ENCODE measurements at regions of chr1 and their contacts with region 1.

Region 1: DNA sequence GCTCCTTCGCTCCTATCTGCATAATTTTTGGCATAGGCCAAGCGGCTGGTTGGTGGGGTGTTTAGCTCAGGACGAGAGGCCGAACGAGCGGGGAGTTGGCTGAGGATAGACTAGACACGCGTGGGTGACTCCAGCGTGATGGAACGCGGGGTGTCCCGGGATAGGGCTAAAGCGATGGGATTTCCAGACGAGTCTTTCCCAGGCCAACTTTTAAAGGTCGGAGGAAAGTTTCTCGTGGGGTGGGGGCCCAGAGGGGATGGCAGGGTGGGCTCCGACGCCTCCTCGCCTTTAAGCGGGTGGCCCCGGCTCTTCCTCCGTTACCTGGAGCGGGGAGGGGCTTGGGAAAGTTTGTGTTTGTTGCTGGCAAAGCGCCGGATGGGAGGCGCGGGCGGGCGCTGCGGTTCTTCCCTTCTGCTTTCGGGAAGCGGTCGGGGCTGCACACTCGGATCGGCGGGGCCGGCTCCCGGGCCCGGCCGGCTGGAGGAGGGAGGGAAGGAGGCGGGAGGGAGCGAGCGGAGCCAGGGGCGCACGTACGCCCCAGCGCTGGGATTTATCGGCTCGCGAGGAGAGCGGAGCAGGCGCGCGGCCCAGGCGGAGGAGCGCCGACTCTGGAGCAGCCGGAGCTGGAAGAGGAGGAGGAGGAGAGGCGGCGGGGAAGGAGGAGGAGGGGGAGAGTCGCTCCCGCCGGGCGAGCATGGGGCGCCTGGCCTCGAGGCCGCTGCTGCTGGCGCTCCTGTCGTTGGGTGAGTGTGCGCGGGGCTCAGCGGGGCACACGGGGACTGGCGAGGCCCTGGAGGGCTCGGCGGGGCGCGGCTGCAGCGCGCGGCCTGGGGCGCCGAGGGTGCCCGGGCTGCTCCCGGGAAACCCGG is at the start of gene PTGFRN:
- DNase-seq: peak in 3 of 5 donors; percentile 12 to 19 (median 19)
- H3K4me3 ChIP-seq: peak within 1 kb of the TSS; percentile 18 to 54
- H3K4me3 Mint-ChIP-seq: peak within 1 kb of the TSS; percentile 77 to 90 (median 84)
- H3K27ac ChIP-seq: no peak within 1 kb of the TSS
- H3K27ac Mint-ChIP-seq: peak within 1 kb of the TSS in 4 of 7 donors; percentile 5 to 67 (median 32)
- H3K4me1 ChIP-seq: peaks cover 13% of the 10 kb centered on the region
- H3K4me1 Mint-ChIP-seq: peaks cover 1 to 7% (median 4%) of the 10 kb centered on the region in 4 donors
- H3K27me3 ChIP-seq: no peaks in the 10 kb centered on the region
- H3K27me3 Mint-ChIP-seq: no peaks in the 10 kb centered on the region
- total RNA-seq, gene PTGFRN: 0.44 to 0.55 TPM

Region 2: DNA sequence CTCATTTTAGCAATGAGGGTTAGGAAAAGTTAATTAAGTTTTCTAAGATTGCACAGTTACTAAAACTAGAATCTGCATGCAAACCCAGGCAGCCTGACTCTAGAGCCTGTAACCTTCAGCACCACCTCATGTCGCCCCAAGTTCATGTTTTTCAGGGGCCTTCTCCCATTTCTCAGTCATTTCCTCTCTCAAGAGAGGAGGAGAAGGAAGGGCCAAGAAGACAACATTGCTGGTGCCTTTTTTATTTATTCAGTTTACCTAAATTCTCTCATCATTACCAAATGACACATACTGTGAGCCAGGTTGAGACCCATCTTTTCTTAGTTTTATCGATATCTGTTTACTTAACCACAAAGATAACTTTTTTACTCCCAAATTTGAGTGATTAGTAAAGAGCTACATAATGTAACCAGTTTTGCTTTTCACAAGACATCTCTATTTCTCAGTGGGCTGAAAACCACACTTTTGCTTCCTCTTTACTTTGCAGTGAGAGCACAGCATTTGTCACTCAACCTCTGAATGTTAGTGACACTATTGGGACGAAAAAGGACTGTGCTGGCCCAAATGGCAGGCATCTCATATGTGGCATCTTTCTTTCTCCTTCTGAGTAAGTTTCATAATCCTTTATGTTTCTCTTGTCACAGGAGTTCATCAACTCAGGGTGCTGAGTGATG is 91.6 kb after region 1 on chr1 and contains the start of gene CD101:
- CTCF ChIA-PET with region 1: no interaction called
- POLR2A ChIA-PET with region 1: no interaction called
- intact Hi-C with region 1: loop called (anchors 10 kb)
- DNase-seq: peak in 2 of 5 donors; percentile 16 to 17
- H3K4me3 ChIP-seq: no peak within 1 kb of the TSS
- H3K4me3 Mint-ChIP-seq: peak within 1 kb of the TSS in 7 of 8 donors; percentile 4 to 69 (median 64)
- H3K27ac ChIP-seq: no peak within 1 kb of the TSS
- H3K27ac Mint-ChIP-seq: peak within 1 kb of the TSS; percentile 28 to 91 (median 76)
- H3K4me1 ChIP-seq: peaks cover 10% of the 10 kb centered on the region
- H3K4me1 Mint-ChIP-seq: peaks cover 20 to 31% (median 29%) of the 10 kb centered on the region in 4 donors
- H3K27me3 ChIP-seq: no peaks in the 10 kb centered on the region
- H3K27me3 Mint-ChIP-seq: no peaks in the 10 kb centered on the region
- total RNA-seq, gene CD101: 2.1 to 2.6 TPM

Region 3: DNA sequence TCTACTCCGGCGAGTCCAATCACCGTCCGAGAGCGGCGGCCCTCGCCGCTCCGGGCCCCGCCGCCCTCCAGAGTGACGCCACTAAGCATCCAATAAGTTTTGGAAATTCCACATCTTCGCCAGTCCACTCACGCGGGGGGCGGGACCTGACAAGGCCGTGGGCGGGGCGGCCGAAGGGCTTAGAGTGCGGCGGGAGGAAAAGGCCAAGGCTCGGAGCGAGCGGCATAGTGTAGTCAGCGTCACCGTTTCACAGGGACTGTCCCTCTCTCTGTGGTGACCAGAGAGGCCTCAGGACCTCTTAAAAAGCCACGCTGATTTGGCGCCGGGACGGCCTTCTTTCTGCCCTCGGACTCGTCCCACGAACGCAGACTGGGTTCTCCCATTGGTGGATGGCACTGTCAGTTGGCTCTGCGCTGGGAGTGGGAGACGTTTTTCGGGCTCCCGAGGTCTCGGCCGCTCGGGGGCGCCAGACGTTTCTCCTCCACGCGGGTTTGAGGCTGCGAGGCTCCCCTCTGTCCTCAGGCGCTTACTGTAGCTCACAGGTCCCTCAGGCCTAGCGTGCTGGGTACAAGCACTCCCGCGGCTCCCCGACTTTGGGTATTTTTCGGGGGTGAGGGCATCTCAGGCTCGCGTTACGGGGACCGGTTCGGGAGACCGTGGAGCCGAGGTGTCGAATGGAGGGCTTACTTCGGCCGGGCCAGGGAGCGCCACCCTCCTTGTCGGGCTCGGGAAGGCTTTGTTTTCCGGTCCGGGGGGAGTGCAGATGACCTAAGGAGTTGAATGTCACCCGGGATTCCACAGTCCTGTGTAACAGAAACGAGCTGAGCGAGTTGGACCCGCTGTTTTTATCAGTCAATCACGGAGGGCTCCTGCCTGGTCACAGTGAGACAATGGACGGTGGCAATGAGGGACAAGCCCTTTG is 212.3 kb after region 1 on chr1:
- CTCF ChIA-PET with region 1: no interaction called
- POLR2A ChIA-PET with region 1: no interaction called
- intact Hi-C with region 1: no loop called
- DNase-seq: peak; percentile 79 to 83 (median 82)
- H3K4me3 ChIP-seq: peak overlapping the region; percentile 85 to 98
- H3K4me3 Mint-ChIP-seq: peak overlapping the region; percentile 87 to 92 (median 88)
- H3K27ac ChIP-seq: peak overlapping the region; percentile 53
- H3K27ac Mint-ChIP-seq: peak overlapping the region; percentile 7 to 87 (median 70)
- H3K4me1 ChIP-seq: peaks cover 15% of the 10 kb centered on the region
- H3K4me1 Mint-ChIP-seq: peaks cover 4 to 10% (median 8%) of the 10 kb centered on the region in 4 donors
- H3K27me3 ChIP-seq: no peaks in the 10 kb centered on the region
- H3K27me3 Mint-ChIP-seq: peaks cover 4 to 5% of the 10 kb centered on the region in 2 donors

Measured in CD4-positive, alpha-beta memory T cell (primary cell).